PC-9 (cell line): ENCODE measurements at regions of chr1 and their contacts with region 1.

Region 1: GRCh38 chr1:61301824-61302657 is 219.7 kb downstream of the NFIA start:
- DNase-seq: no peak
- H3K4me3 ChIP-seq: no peak overlapping the region
- H3K27ac ChIP-seq: no peak overlapping the region
- H3K4me1 ChIP-seq: peaks cover 18% of the 10 kb centered on the region
- H3K27me3 ChIP-seq: no peaks in the 10 kb centered on the region
- CTCF ChIP-seq: no peak

Region 2: DNA sequence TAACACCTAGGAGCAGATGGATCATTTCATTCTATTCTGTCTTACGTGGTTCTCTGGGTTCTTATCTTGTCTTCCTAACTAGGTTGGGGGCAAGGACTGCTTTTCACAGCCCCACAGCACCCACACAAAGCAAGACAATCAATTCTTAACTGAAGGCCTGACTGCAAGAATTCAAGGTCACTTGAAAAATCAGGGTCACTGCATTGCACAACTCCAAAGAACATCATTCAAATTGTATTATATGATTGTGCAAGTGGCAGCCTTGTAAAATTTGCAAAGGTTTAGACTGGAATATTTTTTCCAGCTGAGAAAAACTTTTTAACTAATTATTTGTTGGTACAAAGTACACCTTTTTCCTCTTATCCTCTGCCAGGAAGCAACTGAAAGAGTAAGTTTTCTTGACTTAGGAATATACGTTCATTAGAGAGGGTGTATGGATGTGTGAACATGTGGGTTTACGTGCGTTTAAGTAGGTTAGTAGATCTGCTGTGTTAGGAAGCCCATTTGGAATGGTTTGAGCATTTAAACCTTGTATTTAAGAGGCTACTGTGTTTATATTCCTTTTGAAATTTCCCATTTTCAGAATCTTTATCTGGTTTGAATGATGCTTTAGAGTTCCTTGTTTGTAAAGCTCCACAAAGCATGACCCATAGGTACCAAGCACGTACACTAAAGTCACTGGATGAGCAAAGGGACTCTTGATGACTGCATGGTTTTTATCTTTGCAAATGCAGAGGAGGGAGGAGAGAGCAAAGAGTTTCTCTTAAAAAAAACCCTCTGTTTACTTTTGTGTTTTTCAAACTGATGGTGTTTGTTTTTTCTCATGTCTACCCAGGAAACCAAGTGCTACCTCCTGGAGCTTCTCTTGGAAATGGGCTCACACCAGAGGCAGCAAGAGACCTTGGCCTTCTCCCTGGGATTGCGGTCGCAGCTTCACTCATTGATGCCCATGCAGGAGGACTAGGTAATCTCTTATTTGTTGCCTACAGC is 1790.3 kb before region 1 on chr1:
- CTCF ChIA-PET with region 1: no interaction called
- POLR2A ChIA-PET with region 1: no interaction called
- intact Hi-C with region 1: loop called (anchors 10 kb)
- DNase-seq: no peak
- H3K4me3 ChIP-seq: no peak overlapping the region
- H3K27ac ChIP-seq: no peak overlapping the region
- H3K4me1 ChIP-seq: no peaks in the 10 kb centered on the region
- H3K27me3 ChIP-seq: no peaks in the 10 kb centered on the region
- CTCF ChIP-seq: no peak

Region 3: DNA sequence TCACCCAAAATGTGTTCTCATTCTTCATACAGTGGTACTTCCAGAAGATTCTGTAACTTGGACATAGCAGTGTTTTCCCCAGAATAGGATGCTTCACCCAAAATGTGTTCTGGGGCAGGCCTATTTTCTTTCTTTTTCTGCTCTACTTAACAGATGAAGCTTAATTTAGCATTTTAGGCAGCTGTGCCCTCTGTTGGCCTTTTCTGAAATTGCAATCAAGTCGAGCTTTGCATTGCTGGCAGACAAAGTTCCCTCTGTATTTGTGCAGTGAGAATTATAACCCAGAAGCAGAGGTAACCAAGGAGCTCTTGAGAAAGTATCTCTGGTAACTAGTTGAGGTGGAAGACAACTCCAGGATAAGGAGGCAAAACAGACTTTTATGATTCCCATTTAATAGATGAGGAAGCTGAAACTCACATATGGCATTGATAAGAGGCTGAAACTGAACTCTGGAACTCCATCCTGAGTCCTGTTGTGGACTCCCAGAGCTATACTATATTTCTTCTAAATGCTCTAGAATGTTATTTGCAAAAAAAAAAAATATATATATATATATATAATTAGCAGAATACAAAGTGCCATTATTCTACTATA is 842.3 kb after region 1 on chr1:
- CTCF ChIA-PET with region 1: no interaction called
- POLR2A ChIA-PET with region 1: interaction called, 14 read pairs
- intact Hi-C with region 1: no loop called
- DNase-seq: peak in 1 of 2 experiments; percentile 49
- H3K4me3 ChIP-seq: no peak overlapping the region
- H3K27ac ChIP-seq: no peak overlapping the region
- H3K4me1 ChIP-seq: no peaks in the 10 kb centered on the region
- H3K27me3 ChIP-seq: no peaks in the 10 kb centered on the region
- CTCF ChIP-seq: peak; percentile 82